Esophagus muscularis mucosa (tissue), 4 donors: ENCODE measurements at regions of chr11 and their contacts with region 1.

Region 1: GRCh38 chr11:10307442-10308207 is 2.8 kb downstream of the ADM start:
- DNase-seq: peak; percentile 94
- H3K4me3 ChIP-seq: peak overlapping the region; percentile 64 to 85 (median 81)
- H3K27ac ChIP-seq: peak overlapping the region; percentile 91 to 95 (median 93)
- H3K4me1 ChIP-seq: peaks cover 46 to 77% (median 63%) of the 10 kb centered on the region in 4 donors
- H3K27me3 ChIP-seq: peaks cover 0 to 5% (median 0%) of the 10 kb centered on the region in 4 donors
- CTCF ChIP-seq: peak; percentile 96 to 99 (median 98)
- EP300 ChIP-seq: no peak
- POLR2A ChIP-seq: no peak

Region 2: GRCh38 chr11:9861860-9862725 is 445.5 kb before region 1 on chr11:
- intact Hi-C with region 1: loop called (anchors 10 kb)
- DNase-seq: no peak
- H3K4me3 ChIP-seq: no peak overlapping the region
- H3K27ac ChIP-seq: no peak overlapping the region
- H3K4me1 ChIP-seq: peaks cover 4 to 19% (median 8%) of the 10 kb centered on the region in 4 donors
- H3K27me3 ChIP-seq: no peaks in the 10 kb centered on the region
- CTCF ChIP-seq: peak; percentile 63 to 83 (median 67)
- EP300 ChIP-seq: no peak
- POLR2A ChIP-seq: no peak

Region 3: GRCh38 chr11:9990221-9990975 is 317.2 kb before region 1 on chr11:
- intact Hi-C with region 1: loop called (anchors 5 kb)
- DNase-seq: no peak
- H3K4me3 ChIP-seq: no peak overlapping the region
- H3K27ac ChIP-seq: no peak overlapping the region
- H3K4me1 ChIP-seq: no peaks in the 10 kb centered on the region
- H3K27me3 ChIP-seq: no peaks in the 10 kb centered on the region
- CTCF ChIP-seq: peak; percentile 27 to 50 (median 39)
- EP300 ChIP-seq: no peak
- POLR2A ChIP-seq: no peak

Region 4: GRCh38 chr11:10778217-10778970 is 470.8 kb after region 1 on chr11:
- intact Hi-C with region 1: no loop called
- DNase-seq: no peak
- H3K4me3 ChIP-seq: no peak overlapping the region
- H3K27ac ChIP-seq: peak overlapping the region; percentile 73 to 79 (median 74)
- H3K4me1 ChIP-seq: peaks cover 14 to 25% (median 16%) of the 10 kb centered on the region in 4 donors
- H3K27me3 ChIP-seq: no peaks in the 10 kb centered on the region
- CTCF ChIP-seq: no peak
- EP300 ChIP-seq: no peak
- POLR2A ChIP-seq: no peak